ENCODE measurements at regions of chr12 and their contacts with region 1.

Region 1: DNA sequence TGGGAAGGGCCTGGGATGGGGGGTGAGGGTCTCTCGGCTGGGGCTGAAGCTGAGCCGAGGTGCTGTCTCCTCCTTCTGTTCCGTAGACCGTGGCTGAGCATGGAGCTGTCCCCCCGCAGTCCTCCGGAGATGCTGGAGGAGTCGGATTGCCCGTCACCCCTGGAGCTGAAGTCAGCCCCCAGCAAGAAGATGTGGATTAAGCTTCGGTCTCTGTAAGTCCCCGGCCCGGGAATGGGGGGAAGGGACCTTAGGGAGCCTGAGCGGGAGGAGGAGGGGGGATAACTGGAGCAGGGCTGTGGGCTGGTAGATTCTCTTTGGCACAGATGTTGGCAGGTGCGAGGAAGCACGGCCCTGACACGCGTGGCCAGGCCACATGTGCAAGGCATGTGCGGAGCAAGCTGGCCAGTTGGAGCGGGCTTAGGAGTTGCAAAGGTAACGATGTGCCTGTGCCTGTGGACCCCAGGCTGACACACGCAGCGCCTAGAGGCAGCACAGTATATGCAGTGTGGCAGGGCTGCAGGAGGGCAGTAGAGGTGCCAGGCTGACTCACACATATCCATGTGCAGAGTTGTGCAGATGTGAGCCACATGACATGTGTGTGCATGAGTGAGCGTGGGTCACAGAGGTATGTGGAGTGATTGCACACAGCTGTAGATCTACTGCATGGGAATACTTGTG is 512 bp downstream of the PDE1B start:
- DNase-seq: peak in 10 of 14 experiments; percentile 3 to 42 (median 20)
- ATAC-seq: peak; percentile 68
- H3K4me3 ChIP-seq: peak overlapping the region; percentile 50
- H3K4me3 Mint-ChIP-seq: peak overlapping the region; percentile 92
- H3K27ac ChIP-seq: no peak overlapping the region
- H3K27ac Mint-ChIP-seq: no peak overlapping the region
- H3K4me1 ChIP-seq: peaks cover 18% of the 10 kb centered on the region
- H3K4me1 Mint-ChIP-seq: peaks cover 29% of the 10 kb centered on the region
- H3K27me3 ChIP-seq: no peaks in the 10 kb centered on the region
- H3K27me3 Mint-ChIP-seq: no peaks in the 10 kb centered on the region
- CTCF ChIP-seq: no peak

Region 2: GRCh38 chr12:54560374-54560858 is 10.5 kb after region 1 on chr12:
- CTCF ChIA-PET with region 1: no interaction called
- POLR2A ChIA-PET with region 1: interaction called, 46 read pairs
- intact Hi-C with region 1: no loop called
- DNase-seq: peak; percentile 73 to 95 (median 83)
- ATAC-seq: peak; percentile 100
- H3K4me3 ChIP-seq: peak overlapping the region; percentile 61
- H3K4me3 Mint-ChIP-seq: peak overlapping the region; percentile 82
- H3K27ac ChIP-seq: peak overlapping the region; percentile 32 to 38
- H3K27ac Mint-ChIP-seq: peak overlapping the region; percentile 46
- H3K4me1 ChIP-seq: peaks cover 19% of the 10 kb centered on the region
- H3K4me1 Mint-ChIP-seq: peaks cover 39% of the 10 kb centered on the region
- H3K27me3 ChIP-seq: no peaks in the 10 kb centered on the region
- H3K27me3 Mint-ChIP-seq: no peaks in the 10 kb centered on the region
- CTCF ChIP-seq: no peak

Region 3: GRCh38 chr12:54579696-54580333 is 29.9 kb after region 1 on chr12:
- CTCF ChIA-PET with region 1: no interaction called
- POLR2A ChIA-PET with region 1: no interaction called
- intact Hi-C with region 1: no loop called
- DNase-seq: peak; percentile 64 to 87 (median 76)
- ATAC-seq: peak; percentile 98
- H3K4me3 ChIP-seq: no peak overlapping the region
- H3K4me3 Mint-ChIP-seq: no peak overlapping the region
- H3K27ac ChIP-seq: no peak overlapping the region
- H3K27ac Mint-ChIP-seq: no peak overlapping the region
- H3K4me1 ChIP-seq: peaks cover 7% of the 10 kb centered on the region
- H3K4me1 Mint-ChIP-seq: peaks cover 7% of the 10 kb centered on the region
- H3K27me3 ChIP-seq: peaks cover 8 to 12% of the 10 kb centered on the region in 2 experiments
- H3K27me3 Mint-ChIP-seq: peaks cover 15% of the 10 kb centered on the region
- CTCF ChIP-seq: peak; percentile 90

Region 4: GRCh38 chr12:54596526-54596946 is 46.6 kb after region 1 on chr12:
- CTCF ChIA-PET with region 1: no interaction called
- POLR2A ChIA-PET with region 1: no interaction called
- intact Hi-C with region 1: no loop called
- DNase-seq: peak; percentile 12 to 71 (median 36)
- ATAC-seq: peak; percentile 60
- H3K4me3 ChIP-seq: no peak overlapping the region
- H3K4me3 Mint-ChIP-seq: no peak overlapping the region
- H3K27ac ChIP-seq: no peak overlapping the region
- H3K27ac Mint-ChIP-seq: no peak overlapping the region
- H3K4me1 ChIP-seq: peaks cover 5% of the 10 kb centered on the region
- H3K4me1 Mint-ChIP-seq: peaks cover 5% of the 10 kb centered on the region
- H3K27me3 ChIP-seq: peaks cover 0 to 2% of the 10 kb centered on the region in 2 experiments
- H3K27me3 Mint-ChIP-seq: peaks cover 11% of the 10 kb centered on the region
- CTCF ChIP-seq: peak; percentile 85